Colonic mucosa (tissue), 4 donors: ENCODE measurements at regions of chr2 and their contacts with region 1.

Region 1: DNA sequence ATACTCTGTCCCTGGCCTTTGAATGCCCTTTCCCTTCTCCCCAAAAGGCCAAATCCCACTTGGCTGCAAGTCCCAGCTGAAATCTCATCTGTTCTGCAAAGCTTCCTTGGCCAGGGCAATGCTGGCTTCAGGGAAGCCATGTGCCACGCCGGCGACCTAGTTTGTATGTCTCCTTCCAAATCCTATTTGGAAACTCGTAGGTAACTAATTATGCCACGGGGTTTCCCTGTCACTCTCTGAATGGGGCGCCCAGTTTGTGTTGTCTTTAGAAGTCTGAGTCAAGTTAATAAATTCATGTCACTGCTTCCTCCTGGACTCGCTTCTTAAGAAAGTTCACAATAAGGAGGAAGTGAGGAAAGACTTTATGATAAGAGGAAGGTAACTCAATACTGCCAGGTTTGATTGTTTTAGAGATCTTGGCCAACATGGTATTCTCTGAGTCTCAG is 19.1 kb downstream of the FHL2 start:
- DNase-seq: no peak
- H3K4me3 ChIP-seq: no peak overlapping the region
- H3K27ac ChIP-seq: peak overlapping the region; percentile 80
- H3K4me1 ChIP-seq: no peaks in the 10 kb centered on the region
- H3K27me3 ChIP-seq: no peaks in the 10 kb centered on the region
- CTCF ChIP-seq: no peak

Region 2: GRCh38 chr2:105454801-105455485 is 75.2 kb after region 1 on chr2:
- intact Hi-C with region 1: loop called (anchors 5 kb)
- DNase-seq: peak; percentile 58
- H3K4me3 ChIP-seq: no peak overlapping the region
- H3K27ac ChIP-seq: peak overlapping the region; percentile 64
- H3K4me1 ChIP-seq: no peaks in the 10 kb centered on the region
- H3K27me3 ChIP-seq: no peaks in the 10 kb centered on the region
- CTCF ChIP-seq: no peak